ENCODE measurements at regions of chr2 and their contacts with region 1.

Region 1: GRCh38 chr2:226984750-226985582 is 149.1 kb downstream of the RHBDD1 start:
- DNase-seq: peak; percentile 83
- ATAC-seq: peak; percentile 92
- H3K4me3 ChIP-seq: no peak overlapping the region
- H3K27ac ChIP-seq: no peak overlapping the region
- H3K4me1 ChIP-seq: 0 out of 2 replicates have a peak, but pooled peaks cover 4% of the 10 kb centered on the region
- H3K27me3 ChIP-seq: no peaks in the 10 kb centered on the region
- CTCF ChIP-seq: peak; percentile 86
- POLR2A ChIP-seq: 0 out of 2 replicates have a peak, but pooled peaks have one; percentile 24
- RAD21 ChIP-seq: peak; percentile 92

Region 2: GRCh38 chr2:225865468-225865867 is 1119.5 kb before region 1 on chr2:
- CTCF ChIA-PET with region 1: no interaction called
- POLR2A ChIA-PET with region 1: no interaction called
- dilution Hi-C with region 1: no loop called
- in situ Hi-C with region 1: loop called (anchors 25 kb)
- intact Hi-C with region 1: no loop called
- DNase-seq: peak; percentile 64
- ATAC-seq: no peak
- H3K4me3 ChIP-seq: no peak overlapping the region
- H3K27ac ChIP-seq: no peak overlapping the region
- H3K4me1 ChIP-seq: no peaks in the 10 kb centered on the region
- H3K27me3 ChIP-seq: no peaks in the 10 kb centered on the region
- CTCF ChIP-seq: no peak
- POLR2A ChIP-seq: no peak
- RAD21 ChIP-seq: no peak

Region 3: GRCh38 chr2:226813148-226813701 is 171.7 kb before region 1 on chr2:
- CTCF ChIA-PET with region 1: no interaction called
- POLR2A ChIA-PET with region 1: no interaction called
- dilution Hi-C with region 1: no loop called
- in situ Hi-C with region 1: loop called (anchors 5 kb)
- intact Hi-C with region 1: loop called (anchors 1 kb)
- DNase-seq: no peak
- ATAC-seq: no peak
- H3K4me3 ChIP-seq: no peak overlapping the region
- H3K27ac ChIP-seq: no peak overlapping the region
- H3K4me1 ChIP-seq: no peaks in the 10 kb centered on the region
- H3K27me3 ChIP-seq: no peaks in the 10 kb centered on the region
- CTCF ChIP-seq: peak; percentile 49
- POLR2A ChIP-seq: no peak
- RAD21 ChIP-seq: peak; percentile 57

Region 4: GRCh38 chr2:226835796-226836547 is 149.0 kb before region 1 on chr2 and contains the start of gene RHBDD1:
- CTCF ChIA-PET with region 1: no interaction called
- POLR2A ChIA-PET with region 1: no interaction called
- dilution Hi-C with region 1: no loop called
- in situ Hi-C with region 1: no loop called
- intact Hi-C with region 1: loop called (anchors 1 kb)
- DNase-seq: peak; percentile 95
- ATAC-seq: peak; percentile 96
- H3K4me3 ChIP-seq: peak within 1 kb of the TSS; percentile 55
- H3K27ac ChIP-seq: peak within 1 kb of the TSS; percentile 83
- H3K4me1 ChIP-seq: peaks cover 2% of the 10 kb centered on the region; the same call in 1 of the 2 replicates
- H3K27me3 ChIP-seq: no peaks in the 10 kb centered on the region
- CTCF ChIP-seq: no peak
- POLR2A ChIP-seq: peak; percentile 92
- RAD21 ChIP-seq: no peak
- total RNA-seq, gene RHBDD1: 11.9 and 14.0 TPM in 2 replicates

Measured in IMR-90 (cell line).